Tibial artery (tissue), 4 donors: ENCODE measurements at regions of chr19 and their contacts with region 1.

Region 1: DNA sequence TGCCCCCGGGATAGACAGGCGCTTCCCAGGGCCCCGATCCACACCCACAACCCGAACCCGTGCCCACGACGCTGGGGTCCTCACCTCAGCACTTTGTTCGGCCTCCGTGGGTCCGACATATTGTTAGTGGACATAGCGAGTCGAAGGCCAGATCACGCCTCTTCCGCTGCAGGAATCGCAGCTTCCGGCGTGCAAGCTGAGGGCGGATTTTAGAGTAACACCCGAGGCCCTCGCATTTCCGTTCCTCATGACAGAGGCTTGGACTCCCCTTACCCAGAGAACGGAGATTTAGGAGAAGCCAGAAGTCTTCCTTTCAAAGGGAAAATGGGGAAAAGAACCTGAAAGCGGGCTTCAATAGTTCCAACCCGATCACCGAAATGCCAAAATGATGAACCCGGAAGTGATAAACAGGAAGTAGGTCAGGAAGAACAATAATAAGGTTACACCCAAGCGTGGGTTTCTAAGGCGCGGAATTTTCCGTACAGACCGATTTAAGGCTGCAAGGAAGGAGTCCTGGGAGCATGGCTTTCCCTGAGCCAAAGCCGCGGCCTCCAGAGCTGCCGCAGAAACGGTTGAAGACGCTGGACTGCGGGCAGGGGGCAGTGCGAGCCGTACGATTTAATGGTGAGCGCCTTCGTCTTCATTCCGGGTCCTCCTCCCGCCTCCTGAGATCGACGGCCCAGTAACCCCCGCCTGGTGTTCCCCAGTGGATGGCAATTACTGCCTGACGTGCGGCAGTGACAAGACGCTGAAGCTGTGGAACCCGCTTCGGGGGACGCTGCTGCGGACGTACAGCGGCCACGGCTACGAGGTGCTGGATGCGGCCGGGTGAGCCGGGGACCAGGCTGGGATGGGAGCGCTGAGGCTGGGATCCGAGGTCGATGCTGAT is 2.9 kb downstream of the WDR83 start:
- DNase-seq: peak; percentile 77 to 86
- H3K4me3 ChIP-seq: peak overlapping the region; percentile 72 to 75
- H3K27ac ChIP-seq: peak overlapping the region; percentile 93 to 95
- H3K4me1 ChIP-seq: peaks cover 0 to 53% (median 38%) of the 10 kb centered on the region in 4 donors
- H3K27me3 ChIP-seq: no peaks in the 10 kb centered on the region
- CTCF ChIP-seq: no peak

Region 2: GRCh38 chr19:12564016-12564664 is 105.4 kb before region 1 on chr19:
- intact Hi-C with region 1: loop called (anchors 10 kb)
- DNase-seq: peak; percentile 91 to 94
- H3K4me3 ChIP-seq: no peak overlapping the region
- H3K27ac ChIP-seq: peak overlapping the region in 1 of 2 donors; percentile 29
- H3K4me1 ChIP-seq: peaks cover 0 to 8% (median 5%) of the 10 kb centered on the region in 4 donors
- H3K27me3 ChIP-seq: no peaks in the 10 kb centered on the region
- CTCF ChIP-seq: peak; percentile 91 to 94